ENCODE measurements at regions of chr11 and their contacts with region 1.

Region 1: DNA sequence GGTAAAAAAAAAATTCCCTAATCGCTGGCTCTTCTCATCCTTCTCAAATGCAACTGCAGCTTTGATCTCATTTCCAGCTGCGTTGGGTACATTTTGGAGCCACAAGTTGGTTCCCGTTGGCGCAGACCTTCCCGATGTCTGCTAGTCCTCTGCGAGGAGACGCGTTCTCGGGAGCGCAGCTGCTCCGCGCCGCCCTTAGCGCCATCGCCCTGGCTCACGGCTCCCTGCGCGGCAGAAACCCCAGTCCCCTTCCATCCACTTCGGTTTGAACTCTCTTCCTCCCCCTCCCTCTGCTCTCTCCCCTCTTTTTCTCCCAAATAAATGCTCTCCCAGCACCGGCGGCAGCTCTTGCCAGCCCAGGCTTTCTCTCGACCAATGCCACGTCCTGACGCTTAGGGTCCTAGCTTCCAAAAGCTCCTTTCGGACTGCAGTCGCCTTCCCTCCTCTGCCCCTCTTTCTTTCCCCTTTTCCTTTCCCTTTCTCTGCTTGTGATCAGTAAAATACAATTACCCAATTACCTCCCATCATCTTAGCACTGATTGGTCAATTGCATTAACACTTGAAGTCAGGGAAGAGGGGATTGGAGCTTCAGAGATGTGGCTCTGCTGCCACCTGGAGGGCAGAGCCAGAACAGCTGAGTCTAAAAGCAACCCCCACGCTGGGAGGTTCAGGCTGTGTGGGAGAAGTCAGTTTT is 1165.7 kb downstream of the LRRC4C start:
- DNase-seq: peak; percentile 68 to 82
- ATAC-seq: peak; percentile 98
- H3K4me3 ChIP-seq: peak overlapping the region; percentile 49
- H3K27ac ChIP-seq: no peak overlapping the region
- H3K4me1 ChIP-seq: peaks cover 4% of the 10 kb centered on the region; the same call in 1 of the 3 replicates
- CTCF ChIP-seq: peak; percentile 73
- EP300 ChIP-seq: no peak
- POLR2A ChIP-seq: no peak
- RAD21 ChIP-seq: peak; percentile 83 to 84

Region 2: DNA sequence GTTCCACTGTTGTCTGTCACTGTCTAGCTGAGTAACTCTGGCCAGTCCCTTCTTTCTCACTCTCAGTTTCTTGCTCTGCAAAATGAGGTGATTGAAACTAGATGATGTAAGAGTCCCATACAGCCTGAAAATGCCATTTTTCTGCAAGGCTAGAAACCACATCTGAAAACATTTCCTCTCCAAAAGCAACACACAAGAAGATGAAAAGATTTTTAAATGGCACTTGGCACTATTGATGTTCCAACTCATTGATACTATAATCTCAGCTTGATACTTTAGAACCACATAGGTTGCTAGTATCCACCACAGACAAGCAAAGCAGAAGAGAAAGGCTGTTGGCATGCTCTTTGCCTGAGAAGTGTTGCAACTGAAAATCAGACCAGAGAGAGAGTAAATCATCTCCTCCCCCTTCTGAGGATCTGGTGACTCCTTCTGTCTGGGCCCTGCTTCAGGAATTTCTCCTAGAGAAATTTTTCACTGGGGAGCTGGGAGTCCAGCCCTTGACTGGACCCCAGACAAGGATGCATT is 52.2 kb before region 1 on chr11:
- CTCF ChIA-PET with region 1: no interaction called
- POLR2A ChIA-PET with region 1: no interaction called
- DNase-seq: no peak
- ATAC-seq: no peak
- H3K4me3 ChIP-seq: no peak overlapping the region
- H3K27ac ChIP-seq: no peak overlapping the region
- H3K4me1 ChIP-seq: no peaks in the 10 kb centered on the region
- CTCF ChIP-seq: no peak
- EP300 ChIP-seq: no peak
- POLR2A ChIP-seq: no peak
- RAD21 ChIP-seq: no peak

Region 3: DNA sequence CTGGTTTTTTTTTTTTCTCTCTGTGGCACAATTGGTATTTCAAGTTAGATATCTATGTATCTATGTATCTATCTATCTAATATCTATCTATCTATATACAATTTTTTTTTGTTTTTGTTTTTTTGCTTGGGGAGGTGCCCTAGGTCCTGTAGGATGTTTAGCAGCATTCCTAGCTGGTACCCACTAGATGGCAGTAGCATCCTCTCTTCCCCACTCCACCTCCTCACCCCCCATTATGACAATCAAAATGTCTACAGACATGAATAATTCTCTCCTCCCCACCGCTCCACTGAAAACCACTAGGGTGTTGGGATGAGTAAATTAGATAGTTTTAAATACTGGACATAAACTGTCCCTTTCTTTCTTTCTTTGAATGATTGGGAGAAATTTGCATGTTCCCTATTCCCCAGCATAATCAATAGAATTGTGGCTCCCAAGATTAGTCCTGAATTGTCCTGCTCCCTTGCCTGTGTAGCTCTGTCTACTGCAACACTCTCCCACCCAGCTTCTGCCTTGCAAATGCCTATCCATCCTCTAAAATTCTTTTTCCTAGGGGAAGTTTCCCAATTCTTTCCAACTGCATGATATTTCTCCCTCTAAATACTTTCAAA is 13.2 kb after region 1 on chr11:
- CTCF ChIA-PET with region 1: interaction called, 19 read pairs
- POLR2A ChIA-PET with region 1: no interaction called
- DNase-seq: peak; percentile 25 to 49
- ATAC-seq: peak; percentile 71 to 89
- H3K4me3 ChIP-seq: no peak overlapping the region
- H3K27ac ChIP-seq: no peak overlapping the region
- H3K4me1 ChIP-seq: no peaks in the 10 kb centered on the region
- CTCF ChIP-seq: peak; percentile 54
- EP300 ChIP-seq: no peak
- POLR2A ChIP-seq: no peak
- RAD21 ChIP-seq: peak; percentile 83 to 84